Cardiac septum (tissue), 1 donor: ENCODE measurements at regions of chr17 and their contacts with region 1.

Region 1: GRCh38 chr17:58631523-58632323 is 60.1 kb downstream of the TEX14 start:
- DNase-seq: peak; percentile 96

Region 2: DNA sequence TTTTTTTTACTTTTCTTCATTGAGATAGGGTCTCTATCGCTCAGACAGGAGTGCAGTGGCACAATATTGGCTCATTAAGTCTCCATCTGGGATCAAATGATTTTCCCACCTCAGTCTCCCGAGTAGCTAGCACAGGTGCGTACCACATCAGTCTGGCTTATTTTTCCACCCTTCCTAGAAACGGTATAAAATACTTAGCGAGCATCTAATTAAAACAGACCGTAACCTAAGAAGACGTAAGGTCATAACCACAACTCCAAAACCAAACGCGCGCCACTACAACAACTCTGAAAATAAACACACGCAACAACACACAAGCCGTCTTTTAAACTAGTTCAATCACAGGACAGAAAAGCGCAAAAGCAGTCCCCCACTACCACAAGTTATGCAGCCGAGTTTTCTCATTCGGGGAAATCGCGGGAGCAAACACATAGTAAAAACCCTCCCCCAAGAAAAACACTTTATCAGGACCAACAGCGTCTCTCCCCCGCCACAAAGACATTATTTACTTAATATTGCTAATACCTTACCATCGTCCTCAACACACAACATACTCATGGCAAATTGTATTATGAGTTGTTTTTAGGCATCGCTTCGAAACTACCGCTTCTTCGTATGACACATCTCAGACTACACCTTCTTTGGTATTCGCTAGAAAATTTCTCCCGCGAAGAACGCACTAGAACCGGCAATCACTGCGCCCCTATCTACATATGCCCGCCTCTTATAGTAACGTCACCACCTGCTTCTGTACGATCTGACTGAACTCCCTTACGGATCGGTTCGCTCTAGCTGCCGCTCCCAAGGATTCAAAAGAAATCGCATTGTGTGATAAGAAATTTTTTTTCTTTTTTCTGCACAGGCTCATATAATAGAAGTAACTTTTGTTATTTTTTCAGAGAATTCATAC is 27.3 kb after region 1 on chr17:
- intact Hi-C with region 1: loop called (anchors 2 kb)
- DNase-seq: peak; percentile 76